K562 (cell line): ENCODE measurements at regions of chr22 and their contacts with region 1.

Region 1: DNA sequence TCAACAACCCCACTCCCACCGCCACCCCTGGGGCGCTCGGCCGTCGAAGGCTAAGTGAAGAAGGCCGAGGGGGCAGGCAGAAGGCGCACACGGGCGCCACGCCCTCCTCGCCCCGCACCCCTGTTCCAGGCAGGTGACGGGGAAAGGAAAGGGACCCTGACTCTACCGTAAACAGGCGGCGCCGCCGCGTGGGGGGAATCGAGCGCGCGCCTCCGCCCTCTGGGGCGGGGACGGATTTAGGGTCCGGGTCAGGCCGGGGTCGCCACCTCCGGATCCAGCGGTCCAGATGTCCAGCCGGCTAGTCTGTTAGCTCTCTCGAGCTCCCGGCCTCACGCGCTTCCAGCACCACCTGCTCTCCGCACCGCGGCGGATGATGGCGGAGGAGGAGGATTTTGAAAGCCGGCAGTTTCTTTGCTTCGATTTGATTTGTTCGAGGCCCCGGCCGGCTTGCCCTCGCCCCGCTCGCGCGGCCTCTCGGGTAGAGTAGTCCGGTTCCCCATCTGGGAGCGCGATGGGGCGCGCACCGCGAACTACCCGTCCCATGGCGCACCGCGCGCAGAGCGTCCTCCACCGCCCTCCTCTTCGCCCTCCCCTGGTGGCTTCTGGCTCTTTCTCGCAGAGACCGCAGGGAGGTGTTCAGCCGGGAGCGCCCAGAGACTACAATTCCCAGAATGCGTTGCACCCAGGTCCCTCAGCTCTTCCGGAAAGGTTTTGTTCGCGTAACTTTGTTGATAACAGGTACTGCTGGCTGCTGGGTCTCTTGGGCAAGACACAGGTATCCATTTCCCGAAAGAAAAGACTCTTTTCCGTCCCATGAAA is at the start of gene RANGAP1:
- DNase-seq: peak; percentile 88 to 97 (median 92)
- ATAC-seq: peak; percentile 99
- H3K4me3 ChIP-seq: peak within 1 kb of the TSS; percentile 96
- H3K27ac ChIP-seq: peak within 1 kb of the TSS; percentile 97
- H3K4me1 ChIP-seq: peaks cover 12 to 20% of the 10 kb centered on the region in 2 experiments
- H3K27me3 ChIP-seq: no peaks in the 10 kb centered on the region
- CTCF ChIP-seq: peak in 2 of 3 experiments; percentile 2 to 28; a peak in 2 of 6 replicates
- EP300 ChIP-seq: no peak
- POLR2A ChIP-seq: peak; percentile 84
- RAD21 ChIP-seq: no peak
- polyA plus RNA-seq, gene RANGAP1: 2.1 to 3.8 TPM

Region 2: GRCh38 chr22:41301105-41302020 is 15.3 kb after region 1 on chr22 and contains the start of gene ZC3H7B:
- CTCF ChIA-PET with region 1: no interaction called
- POLR2A ChIA-PET with region 1: interaction called, 11 read pairs
- in situ Hi-C with region 1: no loop called
- intact Hi-C with region 1: no loop called
- DNase-seq: peak; percentile 76 to 87 (median 81)
- ATAC-seq: peak; percentile 94
- H3K4me3 ChIP-seq: peak within 1 kb of the TSS; percentile 90
- H3K27ac ChIP-seq: peak within 1 kb of the TSS; percentile 92
- H3K4me1 ChIP-seq: peaks cover 2 to 10% of the 10 kb centered on the region in 2 experiments; a peak in 3 of 5 replicates
- H3K27me3 ChIP-seq: no peaks in the 10 kb centered on the region
- CTCF ChIP-seq: peak; percentile 44 to 70 (median 55)
- EP300 ChIP-seq: no peak
- POLR2A ChIP-seq: peak; percentile 77
- RAD21 ChIP-seq: peak in 1 of 2 experiments; percentile 34; a peak in 2 of 4 replicates
- polyA plus RNA-seq, gene ZC3H7B: 0.07 to 0.30 TPM

Region 3: GRCh38 chr22:41381329-41382097 is 95.5 kb after region 1 on chr22 and contains the start of gene TEF:
- CTCF ChIA-PET with region 1: no interaction called
- POLR2A ChIA-PET with region 1: no interaction called
- in situ Hi-C with region 1: no loop called
- intact Hi-C with region 1: loop called (anchors 5 kb)
- DNase-seq: peak; percentile 95 to 98 (median 96)
- ATAC-seq: peak; percentile 94
- H3K4me3 ChIP-seq: peak within 1 kb of the TSS; percentile 86
- H3K27ac ChIP-seq: peak within 1 kb of the TSS; percentile 96
- H3K4me1 ChIP-seq: peaks cover 2 to 28% of the 10 kb centered on the region in 2 experiments; a peak in 4 of 5 replicates
- H3K27me3 ChIP-seq: no peaks in the 10 kb centered on the region
- CTCF ChIP-seq: no peak
- EP300 ChIP-seq: no peak
- POLR2A ChIP-seq: peak; percentile 55
- RAD21 ChIP-seq: no peak
- polyA plus RNA-seq, gene TEF: 0.04 to 0.06 TPM